Left cardiac atrium (tissue), 4 donors: ENCODE measurements at regions of chr18 and their contacts with region 1.

Region 1: GRCh38 chr18:3281456-3282400 is 19.8 kb downstream of the MYL12B start:
- DNase-seq: no peak
- ATAC-seq: peak; percentile 83 to 86

Region 2: DNA sequence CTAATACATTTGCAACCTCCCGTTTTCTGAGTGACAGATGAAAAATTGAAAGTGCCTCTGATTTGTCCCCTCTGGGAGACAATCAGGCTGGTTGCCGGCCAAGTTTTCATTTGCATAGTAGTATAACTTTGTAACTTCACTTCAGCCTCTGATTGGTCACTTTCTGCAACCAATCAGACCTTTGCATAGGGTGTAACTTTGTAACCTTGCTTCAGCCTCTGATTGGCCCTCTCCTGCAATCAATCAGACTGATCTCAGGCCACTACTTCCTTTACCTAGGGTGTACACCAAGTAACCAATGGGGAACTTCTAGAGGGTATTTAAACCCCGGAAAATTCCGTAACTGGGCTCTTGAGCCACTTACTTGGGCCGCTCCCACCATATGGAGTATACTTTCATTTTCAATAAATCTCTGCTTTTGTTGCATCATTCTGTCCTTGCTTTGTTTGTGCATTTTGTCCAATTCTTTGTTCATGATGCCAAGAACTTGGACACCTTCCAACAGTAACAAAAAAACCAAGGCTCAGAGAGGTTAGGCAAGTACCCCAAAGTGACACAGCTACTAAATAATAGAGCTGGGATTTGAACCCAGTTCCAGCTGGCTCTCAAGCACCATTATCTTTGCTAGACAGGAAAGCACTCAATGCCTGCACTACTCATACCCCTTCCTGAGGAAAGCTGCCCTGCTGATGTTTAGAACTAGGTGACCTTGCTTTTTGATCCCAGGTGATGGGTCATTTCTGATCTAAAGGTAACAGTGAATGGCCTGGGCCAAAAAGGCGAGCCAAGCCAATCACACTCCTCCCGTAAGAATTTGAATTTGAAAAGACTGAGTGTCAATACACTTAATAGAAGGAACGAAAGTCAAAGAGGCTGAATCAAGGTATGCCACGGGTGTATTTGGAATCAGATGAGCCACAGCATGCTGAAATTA is 51.1 kb before region 1 on chr18:
- intact Hi-C with region 1: no loop called
- DNase-seq: no peak
- ATAC-seq: no peak

Region 3: DNA sequence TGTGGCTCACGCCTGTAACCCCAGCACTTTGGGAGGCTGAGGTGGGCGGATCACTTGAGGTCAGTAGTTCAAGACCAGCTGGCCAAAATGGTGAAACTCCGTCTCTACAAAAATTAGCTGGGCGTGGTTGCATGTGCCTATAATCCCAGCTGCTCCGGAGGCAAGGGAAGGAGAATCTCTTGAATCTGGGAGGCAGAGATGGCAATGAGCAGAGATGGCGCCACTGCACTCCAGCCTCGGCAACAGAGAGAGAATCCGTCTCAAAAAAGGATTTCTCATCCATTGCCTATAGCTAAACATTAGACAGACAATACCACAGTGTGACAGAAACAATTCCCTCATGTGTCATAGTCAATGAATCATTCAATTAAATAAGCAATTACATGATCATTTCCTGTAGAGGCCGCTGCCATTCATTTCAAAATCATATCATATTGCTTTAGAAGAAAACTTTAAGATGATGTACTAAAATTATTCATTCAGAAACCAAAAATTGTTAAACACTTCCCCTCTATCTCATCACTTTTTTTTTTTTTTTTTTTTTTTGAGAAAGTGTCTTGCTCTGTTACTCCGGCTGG is 98.7 kb after region 1 on chr18:
- intact Hi-C with region 1: no loop called
- DNase-seq: no peak
- ATAC-seq: no peak

Region 4: DNA sequence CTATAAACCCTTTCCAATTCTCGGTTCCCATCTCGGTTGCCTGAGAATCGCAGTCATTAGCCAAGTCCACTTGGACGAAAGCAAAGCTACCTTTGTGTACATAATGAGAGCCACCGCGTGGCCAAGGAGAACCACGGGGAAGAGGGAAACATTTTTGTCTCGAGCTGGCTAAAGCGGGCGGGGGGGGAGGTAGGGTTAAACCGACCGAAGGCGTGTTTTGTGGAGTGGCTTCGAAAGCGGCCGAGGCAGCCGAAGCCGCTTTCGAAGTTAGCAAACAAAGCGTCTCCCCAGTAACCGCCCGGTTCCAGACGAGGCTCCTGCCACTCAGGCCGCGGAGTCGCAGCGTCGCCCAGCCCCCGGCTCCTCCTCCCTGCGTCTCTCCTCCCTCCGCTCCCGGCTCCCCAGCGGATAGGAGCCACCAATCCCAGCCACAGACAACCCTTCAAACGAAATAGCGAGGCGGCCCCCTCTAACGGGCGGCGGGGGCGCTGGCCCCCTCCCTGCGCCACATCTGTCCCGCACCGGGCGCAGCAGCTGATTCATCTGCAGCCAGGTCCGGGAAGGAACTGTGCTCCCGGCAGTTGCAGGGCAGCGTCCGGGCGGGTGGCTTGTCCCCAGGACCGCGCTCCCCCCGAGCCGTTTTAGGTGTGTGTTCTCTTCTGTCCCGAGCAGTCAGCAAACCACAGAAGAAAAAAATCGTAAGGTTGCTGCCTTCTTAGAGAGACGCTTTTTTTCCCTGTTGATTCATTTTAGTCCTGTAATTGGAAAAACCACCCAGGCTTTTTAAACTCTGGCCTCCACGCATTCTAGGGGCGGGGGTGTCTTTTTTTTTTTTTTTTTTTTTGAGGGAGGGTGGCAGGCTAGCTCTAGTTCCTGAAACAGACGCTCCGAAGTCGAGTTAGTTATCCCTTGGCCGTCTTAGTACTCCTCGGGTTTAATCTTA is 166.4 kb after region 1 on chr18:
- intact Hi-C with region 1: loop called (anchors 2 to 10 kb)
- DNase-seq: peak; percentile 95
- ATAC-seq: peak; percentile 78 to 82

Region 5: DNA sequence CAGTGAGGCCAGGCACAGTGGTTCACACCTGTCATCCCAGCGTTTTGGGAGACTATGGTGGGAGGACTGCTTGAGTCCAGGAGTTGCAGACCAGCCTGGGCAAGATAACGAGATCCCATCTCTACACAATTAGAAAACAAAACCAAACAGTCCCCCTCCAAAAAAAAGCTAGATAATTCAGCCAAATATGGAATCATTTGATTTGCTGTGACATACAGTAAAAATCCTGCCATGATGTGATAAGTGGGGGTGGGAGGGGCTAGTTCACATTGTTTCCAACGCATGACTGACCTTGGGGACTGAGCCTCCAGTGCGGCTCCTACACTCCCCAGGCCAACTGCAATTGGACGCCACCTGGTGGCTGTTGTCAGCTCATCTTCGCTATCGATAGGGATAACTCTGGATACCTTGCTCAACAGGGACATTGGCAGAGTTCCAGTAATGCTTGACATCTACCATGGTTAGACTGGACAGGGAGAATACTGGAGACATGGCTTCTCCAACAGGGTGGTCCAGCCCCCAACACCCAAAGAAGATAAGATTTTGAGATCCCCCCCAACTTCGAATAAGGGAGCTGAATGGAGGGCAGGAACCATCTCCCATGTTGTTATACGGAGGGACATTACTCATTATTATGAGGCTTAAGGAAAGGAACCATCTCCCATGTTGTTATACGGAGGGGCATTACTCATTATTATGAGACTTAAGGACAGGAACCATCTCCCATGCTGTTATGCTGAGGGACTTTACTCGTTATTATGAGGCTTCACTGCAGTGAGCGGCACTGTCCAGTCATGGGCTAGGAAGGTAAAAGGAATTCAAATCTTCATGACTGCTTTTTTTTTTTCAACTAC is 304.2 kb after region 1 on chr18:
- intact Hi-C with region 1: loop called (anchors 5 to 10 kb)
- DNase-seq: peak; percentile 84
- ATAC-seq: peak; percentile 89 to 91

Region 6: DNA sequence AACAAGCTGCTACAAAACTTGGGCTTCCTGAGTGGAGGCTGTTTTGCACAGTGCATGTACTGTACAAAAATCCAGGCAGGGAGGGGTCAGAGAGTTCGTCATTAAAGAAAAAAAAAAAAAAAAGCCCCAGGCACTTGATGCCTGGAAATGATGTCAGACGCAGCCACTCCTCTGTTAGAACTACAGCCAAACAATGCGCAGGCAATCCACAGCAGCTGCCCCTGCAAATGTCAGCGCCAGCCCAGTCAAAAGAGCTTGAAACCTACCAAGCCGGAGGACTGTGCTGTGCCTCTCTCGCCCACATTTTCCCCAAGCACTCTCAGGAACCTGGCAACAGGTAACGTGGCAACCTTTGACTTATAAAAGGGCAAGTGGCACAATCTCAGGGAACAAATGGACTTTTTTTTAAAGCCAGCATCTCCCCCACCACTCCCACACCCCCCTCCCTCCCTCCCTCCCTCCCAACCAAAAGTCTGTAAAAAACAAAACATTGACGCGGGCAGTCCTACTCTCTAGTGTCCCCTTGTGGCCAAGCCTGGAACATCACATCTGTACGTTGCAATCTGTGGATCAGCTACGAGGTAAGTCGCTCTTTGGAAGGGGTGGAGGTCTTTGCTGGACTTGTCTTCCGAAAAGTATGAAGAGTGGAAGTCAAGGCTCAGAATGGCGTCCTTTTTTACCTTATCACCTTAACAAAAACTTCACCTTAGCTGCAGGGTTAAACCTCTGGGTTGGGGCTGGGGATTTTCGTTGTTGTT is 312.4 kb after region 1 on chr18:
- intact Hi-C with region 1: loop called (anchors 5 to 10 kb)
- DNase-seq: peak; percentile 90
- ATAC-seq: peak; percentile 78 to 88